ENCODE measurements at regions of chr15 and their contacts with region 1.

Region 1: DNA sequence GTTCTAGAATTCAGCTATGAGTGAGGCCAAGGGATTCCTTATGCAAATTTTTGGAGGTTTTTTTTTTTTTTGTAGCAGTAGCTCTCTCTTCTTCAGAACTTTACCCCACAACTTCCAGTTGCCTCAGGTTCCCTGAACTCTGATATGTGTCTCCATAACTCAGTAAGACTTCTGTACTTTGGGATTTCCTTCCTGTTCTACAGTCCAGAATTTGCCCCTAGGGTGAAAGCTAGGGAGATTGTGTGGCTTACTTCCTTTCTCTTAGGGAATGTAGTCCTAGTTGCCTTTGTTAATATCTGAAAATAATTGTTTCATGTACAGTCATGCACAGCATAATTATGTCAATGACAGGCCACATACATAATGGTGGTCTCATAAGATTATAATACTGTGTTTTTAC is 30.8 kb downstream of the LRRC28 start:
- DNase-seq: no peak
- H3K4me3 Mint-ChIP-seq: no peak overlapping the region
- H3K27ac Mint-ChIP-seq: peak overlapping the region; percentile 63
- H3K4me1 Mint-ChIP-seq: peaks cover 68% of the 10 kb centered on the region
- H3K27me3 Mint-ChIP-seq: no peaks in the 10 kb centered on the region

Region 2: GRCh38 chr15:99213187-99213811 is 68.8 kb before region 1 on chr15:
- intact Hi-C with region 1: no loop called
- DNase-seq: peak; percentile 43
- H3K4me3 Mint-ChIP-seq: no peak overlapping the region
- H3K27ac Mint-ChIP-seq: no peak overlapping the region
- H3K4me1 Mint-ChIP-seq: no peaks in the 10 kb centered on the region
- H3K27me3 Mint-ChIP-seq: peaks cover 5% of the 10 kb centered on the region

Region 3: DNA sequence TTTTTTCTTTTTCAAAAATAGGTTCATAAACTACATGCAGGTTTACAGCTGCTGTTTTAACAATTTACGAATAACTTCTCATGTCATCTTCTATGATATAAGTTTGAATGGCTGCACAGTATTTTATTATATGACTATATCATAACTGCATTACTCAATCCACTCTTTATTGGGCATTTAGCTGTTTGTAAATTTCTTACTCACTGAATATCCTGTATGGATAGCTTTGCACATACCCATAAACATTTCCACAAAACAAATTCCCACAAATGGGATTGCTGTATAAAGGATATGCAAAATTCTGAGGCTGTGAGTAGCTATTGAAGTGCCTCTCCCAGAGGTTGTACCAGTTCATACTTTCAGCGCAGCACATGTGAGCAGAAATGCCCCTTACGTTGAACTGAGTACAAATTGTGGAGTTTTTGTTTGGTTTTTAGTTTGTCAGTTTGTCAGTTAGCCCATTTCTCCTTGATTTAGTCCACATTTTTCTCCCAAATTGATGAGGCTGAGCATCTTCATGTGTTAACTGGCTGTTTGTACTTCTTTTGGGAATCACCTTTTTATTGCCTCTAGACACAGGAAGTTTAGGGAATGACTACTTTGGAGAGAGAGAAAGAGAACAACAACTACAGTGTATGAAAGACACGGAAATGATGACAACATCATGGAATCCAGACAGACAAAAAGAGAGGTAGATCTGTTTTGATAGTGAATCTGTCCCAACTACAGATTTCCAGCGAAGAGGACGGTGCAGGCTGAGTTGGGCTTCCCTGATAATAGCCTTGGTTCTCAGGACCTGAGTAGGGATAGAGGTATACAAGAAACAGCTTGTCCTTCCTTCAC is 57.5 kb before region 1 on chr15:
- intact Hi-C with region 1: no loop called
- DNase-seq: no peak
- H3K4me3 Mint-ChIP-seq: no peak overlapping the region
- H3K27ac Mint-ChIP-seq: no peak overlapping the region
- H3K4me1 Mint-ChIP-seq: no peaks in the 10 kb centered on the region
- H3K27me3 Mint-ChIP-seq: no peaks in the 10 kb centered on the region

Region 4: GRCh38 chr15:99324082-99324620 is 42.0 kb after region 1 on chr15:
- intact Hi-C with region 1: loop called (anchors 1 kb)
- DNase-seq: no peak
- H3K4me3 Mint-ChIP-seq: no peak overlapping the region
- H3K27ac Mint-ChIP-seq: peak overlapping the region; percentile 51
- H3K4me1 Mint-ChIP-seq: peaks cover 20% of the 10 kb centered on the region
- H3K27me3 Mint-ChIP-seq: peaks cover 4% of the 10 kb centered on the region

Region 5: DNA sequence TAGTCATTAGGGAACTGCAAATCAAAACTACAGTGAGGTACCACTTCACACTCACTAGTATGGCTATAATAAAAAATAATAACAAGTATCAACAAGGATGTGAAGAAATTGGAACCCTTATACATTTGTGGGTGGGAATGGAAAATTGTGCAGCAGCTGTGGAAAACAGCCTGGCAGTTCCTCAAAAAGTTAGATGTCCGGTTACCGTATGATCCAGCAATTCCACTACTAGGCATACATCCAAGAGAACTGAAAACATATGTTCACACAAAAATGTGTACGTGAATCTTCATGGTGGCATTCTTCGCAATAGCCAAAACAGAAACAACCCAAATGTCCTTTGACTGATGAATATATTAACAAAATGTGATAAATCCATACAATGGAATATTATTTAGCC is 639.0 kb after region 1 on chr15:
- intact Hi-C with region 1: no loop called
- DNase-seq: no peak
- H3K4me3 Mint-ChIP-seq: no peak overlapping the region
- H3K27ac Mint-ChIP-seq: no peak overlapping the region
- H3K4me1 Mint-ChIP-seq: no peaks in the 10 kb centered on the region
- H3K27me3 Mint-ChIP-seq: peaks cover 29% of the 10 kb centered on the region

Measured in activated T-helper 1 cell treated with anti-CD3 and anti-CD28 coated beads, Interleukin-12 subunit alpha, Interleukin-12 subunit beta, Interleukin-2, Interleukin-4 antibody, amounts not matched to agents 30 ng/mL and 10 ng/mL and 1 ng/mL, durations not matched to agents 14 hours and 24 hours and 36 hours (primary cell).